Panc1 (cell line): ENCODE measurements at regions of chr13 and their contacts with region 1.

Region 1: GRCh38 chr13:30521571-30521970 is 55.8 kb upstream of the HMGB1 start:
- DNase-seq: no peak
- ATAC-seq: no peak
- H3K4me3 ChIP-seq: no peak overlapping the region
- H3K27ac ChIP-seq: no peak overlapping the region
- H3K4me1 ChIP-seq: no peaks in the 10 kb centered on the region
- H3K27me3 ChIP-seq: no peaks in the 10 kb centered on the region
- CTCF ChIP-seq: no peak

Region 2: GRCh38 chr13:30179597-30180276 is 341.8 kb before region 1 on chr13:
- CTCF ChIA-PET with region 1: no interaction called
- POLR2A ChIA-PET with region 1: interaction called, 11 read pairs
- in situ Hi-C with region 1: no loop called
- intact Hi-C with region 1: no loop called
- DNase-seq: no peak
- ATAC-seq: no peak
- H3K4me3 ChIP-seq: no peak overlapping the region
- H3K27ac ChIP-seq: no peak overlapping the region
- H3K4me1 ChIP-seq: no peaks in the 10 kb centered on the region
- H3K27me3 ChIP-seq: no peaks in the 10 kb centered on the region
- CTCF ChIP-seq: no peak